ENCODE measurements at regions of chr13 and their contacts with region 1.

Region 1: GRCh38 chr13:40190641-40191100 is 475.8 kb downstream of the FOXO1 start:
- DNase-seq: peak; percentile 36 to 85 (median 75)
- ATAC-seq: peak; percentile 36
- H3K4me3 ChIP-seq: no peak overlapping the region
- H3K4me3 Mint-ChIP-seq: peak overlapping the region; percentile 66
- H3K27ac ChIP-seq: peak overlapping the region; percentile 50 to 58
- H3K27ac Mint-ChIP-seq: peak overlapping the region; percentile 90
- H3K4me1 ChIP-seq: peaks cover 65% of the 10 kb centered on the region
- H3K4me1 Mint-ChIP-seq: peaks cover 83% of the 10 kb centered on the region
- H3K27me3 ChIP-seq: no peaks in the 10 kb centered on the region
- H3K27me3 Mint-ChIP-seq: no peaks in the 10 kb centered on the region
- CTCF ChIP-seq: no peak

Region 2: GRCh38 chr13:39217471-39217870 is 973.2 kb before region 1 on chr13:
- CTCF ChIA-PET with region 1: no interaction called
- POLR2A ChIA-PET with region 1: no interaction called
- intact Hi-C with region 1: no loop called
- DNase-seq: no peak
- ATAC-seq: no peak
- H3K4me3 ChIP-seq: no peak overlapping the region
- H3K4me3 Mint-ChIP-seq: no peak overlapping the region
- H3K27ac ChIP-seq: no peak overlapping the region
- H3K27ac Mint-ChIP-seq: no peak overlapping the region
- H3K4me1 ChIP-seq: no peaks in the 10 kb centered on the region
- H3K4me1 Mint-ChIP-seq: no peaks in the 10 kb centered on the region
- H3K27me3 ChIP-seq: no peaks in the 10 kb centered on the region
- H3K27me3 Mint-ChIP-seq: peaks cover 5% of the 10 kb centered on the region
- CTCF ChIP-seq: no peak

Region 3: DNA sequence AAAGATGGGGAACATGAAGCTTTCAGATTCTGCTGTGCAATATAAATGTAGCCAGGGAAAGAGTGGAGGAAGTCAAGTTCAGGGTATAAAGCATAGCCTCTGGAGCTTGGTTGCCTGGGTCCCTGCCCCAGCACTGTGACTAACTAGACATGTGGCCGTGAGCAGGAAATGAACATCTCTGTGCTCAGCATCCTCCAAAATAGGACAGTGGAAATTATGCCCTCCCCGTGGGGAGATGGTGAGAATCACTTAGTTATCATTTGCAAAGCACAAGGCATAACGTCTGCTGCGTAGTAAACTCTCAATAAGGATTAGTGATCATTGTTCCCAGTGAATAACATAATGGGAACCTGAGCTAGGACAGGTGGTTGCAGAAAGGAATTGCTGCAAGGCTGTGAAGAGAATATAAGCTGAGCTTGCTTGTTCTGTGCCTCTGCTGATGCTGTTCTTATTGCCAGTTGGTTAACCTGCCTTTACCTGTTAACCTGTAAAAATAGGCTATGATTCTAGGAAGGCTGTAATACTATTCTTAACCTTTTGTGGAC is 94.2 kb before region 1 on chr13:
- CTCF ChIA-PET with region 1: interaction called, 3 read pairs
- POLR2A ChIA-PET with region 1: no interaction called
- intact Hi-C with region 1: loop called in 1 of 2 experiments (anchors 5 kb)
- DNase-seq: peak in 8 of 9 experiments; percentile 13 to 64 (median 31)
- ATAC-seq: peak; percentile 87
- H3K4me3 ChIP-seq: no peak overlapping the region
- H3K4me3 Mint-ChIP-seq: no peak overlapping the region
- H3K27ac ChIP-seq: no peak overlapping the region
- H3K27ac Mint-ChIP-seq: peak overlapping the region; percentile 25
- H3K4me1 ChIP-seq: peaks cover 3% of the 10 kb centered on the region
- H3K4me1 Mint-ChIP-seq: peaks cover 10% of the 10 kb centered on the region
- H3K27me3 ChIP-seq: no peaks in the 10 kb centered on the region
- H3K27me3 Mint-ChIP-seq: no peaks in the 10 kb centered on the region
- CTCF ChIP-seq: no peak

Region 4: DNA sequence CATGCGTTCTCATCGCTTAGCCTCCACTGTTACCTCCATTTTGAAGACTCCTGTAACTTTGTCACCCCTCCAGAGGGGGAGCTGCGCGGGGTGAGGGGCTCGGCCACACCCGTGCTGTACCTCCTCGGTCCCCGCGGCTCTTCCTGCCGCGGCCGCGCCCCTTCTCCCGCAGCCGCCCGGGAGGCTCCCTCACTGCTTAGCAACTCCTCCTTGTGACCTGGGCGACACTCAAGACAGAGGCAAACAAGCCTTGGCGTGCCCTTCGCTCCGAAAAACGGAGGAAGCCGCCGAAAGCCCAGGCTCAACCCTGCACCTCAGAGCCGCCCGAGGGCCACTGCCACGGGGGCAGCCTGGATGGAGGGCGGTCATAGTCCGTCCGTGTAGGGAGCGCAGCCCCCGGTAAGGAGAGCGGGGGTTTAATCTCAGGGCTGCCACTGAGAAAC is 18.5 kb before region 1 on chr13:
- CTCF ChIA-PET with region 1: interaction called, 4 read pairs
- POLR2A ChIA-PET with region 1: interaction called, 10 read pairs
- intact Hi-C with region 1: loop called in 1 of 2 experiments (anchors 2 kb)
- DNase-seq: no peak
- ATAC-seq: no peak
- H3K4me3 ChIP-seq: no peak overlapping the region
- H3K4me3 Mint-ChIP-seq: peak overlapping the region; percentile 37
- H3K27ac ChIP-seq: no peak overlapping the region
- H3K27ac Mint-ChIP-seq: no peak overlapping the region
- H3K4me1 ChIP-seq: peaks cover 11% of the 10 kb centered on the region
- H3K4me1 Mint-ChIP-seq: peaks cover 34% of the 10 kb centered on the region
- H3K27me3 ChIP-seq: no peaks in the 10 kb centered on the region
- H3K27me3 Mint-ChIP-seq: peaks cover 2% of the 10 kb centered on the region
- CTCF ChIP-seq: no peak

Region 5: GRCh38 chr13:40221460-40222201 is 31.0 kb after region 1 on chr13:
- CTCF ChIA-PET with region 1: interaction called, 3 read pairs
- POLR2A ChIA-PET with region 1: interaction called, 8 read pairs
- intact Hi-C with region 1: loop called (anchors 5 kb)
- DNase-seq: peak in 6 of 9 experiments; percentile 8 to 87 (median 49)
- ATAC-seq: peak; percentile 79
- H3K4me3 ChIP-seq: peak overlapping the region in 1 of 2 experiments; percentile 14
- H3K4me3 Mint-ChIP-seq: peak overlapping the region; percentile 67
- H3K27ac ChIP-seq: peak overlapping the region; percentile 6 to 70
- H3K27ac Mint-ChIP-seq: peak overlapping the region; percentile 88
- H3K4me1 ChIP-seq: peaks cover 31% of the 10 kb centered on the region
- H3K4me1 Mint-ChIP-seq: peaks cover 59% of the 10 kb centered on the region
- H3K27me3 ChIP-seq: no peaks in the 10 kb centered on the region
- H3K27me3 Mint-ChIP-seq: no peaks in the 10 kb centered on the region
- CTCF ChIP-seq: no peak

Region 6: GRCh38 chr13:40485611-40486517 is 295.2 kb after region 1 on chr13:
- CTCF ChIA-PET with region 1: interaction called, 5 read pairs
- POLR2A ChIA-PET with region 1: interaction called, 11 read pairs
- intact Hi-C with region 1: loop called (anchors 1 kb)
- DNase-seq: peak; percentile 49 to 94 (median 73)
- ATAC-seq: peak; percentile 92
- H3K4me3 ChIP-seq: peak overlapping the region in 1 of 2 experiments; percentile 33
- H3K4me3 Mint-ChIP-seq: peak overlapping the region; percentile 43
- H3K27ac ChIP-seq: peak overlapping the region; percentile 53 to 61
- H3K27ac Mint-ChIP-seq: peak overlapping the region; percentile 93
- H3K4me1 ChIP-seq: peaks cover 92% of the 10 kb centered on the region
- H3K4me1 Mint-ChIP-seq: peaks cover 91% of the 10 kb centered on the region
- H3K27me3 ChIP-seq: no peaks in the 10 kb centered on the region
- H3K27me3 Mint-ChIP-seq: no peaks in the 10 kb centered on the region
- CTCF ChIP-seq: no peak

Region 7: GRCh38 chr13:40589285-40590109 is 398.8 kb after region 1 on chr13:
- CTCF ChIA-PET with region 1: no interaction called
- POLR2A ChIA-PET with region 1: no interaction called
- intact Hi-C with region 1: loop called in 1 of 2 experiments (anchors 5 kb)
- DNase-seq: peak in 1 of 9 experiments; percentile 39
- ATAC-seq: peak; percentile 13
- H3K4me3 ChIP-seq: peak overlapping the region in 1 of 2 experiments; percentile 11
- H3K4me3 Mint-ChIP-seq: peak overlapping the region; percentile 50
- H3K27ac ChIP-seq: peak overlapping the region in 1 of 2 experiments; percentile 44
- H3K27ac Mint-ChIP-seq: peak overlapping the region; percentile 84
- H3K4me1 ChIP-seq: peaks cover 93% of the 10 kb centered on the region
- H3K4me1 Mint-ChIP-seq: peaks cover 97% of the 10 kb centered on the region
- H3K27me3 ChIP-seq: no peaks in the 10 kb centered on the region
- H3K27me3 Mint-ChIP-seq: no peaks in the 10 kb centered on the region
- CTCF ChIP-seq: no peak

Measured in CD8-positive, alpha-beta T cell (primary cell).